ENCODE measurements at regions of chr1 and their contacts with region 1.

Region 1: GRCh38 chr1:245853291-245853690 is 653.8 kb downstream of the SMYD3 start:
- DNase-seq: no peak
- H3K4me3 ChIP-seq: no peak overlapping the region
- CTCF ChIP-seq: no peak
- POLR2A ChIP-seq: no peak

Region 2: DNA sequence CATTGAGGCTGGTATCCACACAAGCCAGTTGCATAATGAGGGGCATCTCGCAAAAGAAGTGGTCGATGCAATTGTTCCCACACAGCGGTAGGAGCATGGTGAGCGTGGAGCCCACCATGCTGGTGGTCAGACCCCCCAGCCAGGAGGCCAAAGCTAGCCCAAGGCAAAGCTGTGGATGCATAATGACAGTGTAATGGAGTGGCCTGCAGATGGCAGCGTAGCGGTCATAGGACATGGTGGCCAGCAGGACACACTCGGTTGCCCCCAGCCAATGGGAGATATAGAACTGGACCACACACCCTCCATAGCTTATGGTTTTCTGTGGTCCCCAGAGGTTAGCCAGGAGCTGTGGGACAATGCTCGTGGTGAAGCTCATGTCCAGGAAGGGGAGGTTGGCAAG is 1678.6 kb after region 1 on chr1:
- intact Hi-C with region 1: loop called (anchors 5 kb)
- DNase-seq: no peak
- H3K4me3 ChIP-seq: no peak overlapping the region
- CTCF ChIP-seq: no peak
- POLR2A ChIP-seq: no peak

Measured in lower leg skin (tissue), 4 donors.